ENCODE measurements at regions of chr12 and their contacts with region 1.

Region 1: DNA sequence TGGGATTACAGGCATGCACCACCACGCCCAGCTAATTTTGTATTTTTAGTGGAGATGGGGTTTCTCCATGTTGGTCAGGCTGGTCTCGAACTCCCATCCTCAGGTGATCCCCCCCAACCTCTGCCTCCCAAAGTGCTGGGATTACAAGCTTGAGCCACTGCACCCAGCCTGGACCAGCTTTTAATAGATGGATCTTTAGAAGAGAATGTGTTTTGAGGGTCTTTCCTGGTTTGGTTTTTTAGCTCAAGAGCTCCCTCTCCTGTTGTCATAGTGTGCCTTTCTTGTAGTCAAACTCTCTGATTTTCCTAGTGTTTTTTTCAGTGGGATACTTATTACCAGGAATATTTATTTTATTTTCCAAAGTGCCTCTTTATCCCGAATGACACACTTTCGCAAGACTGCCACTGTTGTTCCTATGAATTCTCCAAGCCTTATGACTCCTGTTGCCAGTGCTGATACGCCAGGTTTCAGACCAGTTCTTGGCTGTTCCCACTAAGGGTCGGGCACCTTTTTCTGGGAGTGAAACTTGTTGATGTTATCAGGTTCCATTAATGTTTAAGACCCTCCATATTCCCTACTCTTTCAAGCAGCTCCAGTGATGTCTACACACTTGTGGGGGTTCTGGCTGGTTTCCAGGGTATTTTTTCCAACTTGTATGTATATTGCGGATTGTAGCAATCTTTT is 31.5 kb upstream of the LIMA1 start:
- DNase-seq: peak; percentile 75
- H3K4me3 ChIP-seq: no peak overlapping the region
- H3K27ac ChIP-seq: no peak overlapping the region
- H3K4me1 ChIP-seq: no peaks in the 10 kb centered on the region
- H3K27me3 ChIP-seq: no peaks in the 10 kb centered on the region
- CTCF ChIP-seq: peak; percentile 76

Region 2: DNA sequence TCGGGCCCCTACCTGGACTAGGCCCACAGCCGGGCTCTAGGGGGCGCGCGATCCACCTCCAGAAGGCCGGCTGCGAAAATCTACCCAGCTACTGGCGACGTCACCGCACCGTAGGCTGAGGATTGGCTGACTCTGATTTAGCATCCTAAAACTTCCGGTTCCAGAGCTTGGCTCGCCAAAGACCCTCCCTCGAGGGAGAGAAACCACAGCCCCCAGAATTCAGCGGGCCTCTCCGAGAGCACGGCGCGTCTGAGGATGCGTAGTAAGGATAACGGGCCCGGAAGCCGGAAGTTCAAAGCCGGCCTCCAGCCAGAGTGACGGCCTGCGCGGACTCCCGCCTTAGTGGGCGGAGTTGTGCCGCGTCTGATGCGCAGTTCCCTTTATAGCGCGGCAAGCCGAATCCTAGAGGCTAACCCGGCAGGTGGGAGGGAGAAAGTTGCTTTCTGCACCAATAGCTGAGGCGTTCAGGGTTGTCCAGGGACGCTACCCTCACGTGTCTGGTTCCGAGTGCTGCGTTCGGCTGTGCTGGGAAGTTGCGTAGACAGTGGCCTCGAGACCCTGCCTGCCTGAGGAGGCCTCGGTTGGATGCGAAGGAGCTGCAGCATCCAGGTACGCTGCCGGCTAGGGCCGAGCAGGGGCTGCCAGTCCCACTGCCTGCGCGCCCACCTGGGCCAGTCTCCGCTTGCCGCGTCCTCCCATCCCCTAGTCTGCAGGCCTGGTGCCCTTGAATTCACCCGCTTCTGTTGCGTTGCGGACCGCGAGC is 202.9 kb before region 1 on chr12 and contains the start of gene COX14:
- CTCF ChIA-PET with region 1: interaction called, 10 read pairs
- POLR2A ChIA-PET with region 1: no interaction called
- intact Hi-C with region 1: no loop called
- DNase-seq: peak; percentile 100
- H3K4me3 ChIP-seq: peak within 1 kb of the TSS; percentile 74
- H3K27ac ChIP-seq: peak within 1 kb of the TSS; percentile 89
- H3K4me1 ChIP-seq: peaks cover 26% of the 10 kb centered on the region
- H3K27me3 ChIP-seq: no peaks in the 10 kb centered on the region
- CTCF ChIP-seq: peak; percentile 99
- total RNA-seq, gene COX14: 25.4 and 28.7 TPM in 2 replicates

Region 3: GRCh38 chr12:50132505-50133135 is 182.2 kb before region 1 on chr12:
- CTCF ChIA-PET with region 1: interaction called, 23 read pairs
- POLR2A ChIA-PET with region 1: no interaction called
- intact Hi-C with region 1: loop called (anchors 1 kb)
- DNase-seq: peak; percentile 61
- H3K4me3 ChIP-seq: no peak overlapping the region
- H3K27ac ChIP-seq: no peak overlapping the region
- H3K4me1 ChIP-seq: no peaks in the 10 kb centered on the region
- H3K27me3 ChIP-seq: no peaks in the 10 kb centered on the region
- CTCF ChIP-seq: peak; percentile 74

Region 4: GRCh38 chr12:50187084-50187900 is 127.5 kb before region 1 on chr12:
- CTCF ChIA-PET with region 1: interaction called, 6 read pairs
- POLR2A ChIA-PET with region 1: no interaction called
- intact Hi-C with region 1: loop called (anchors 10 kb)
- DNase-seq: peak; percentile 75
- H3K4me3 ChIP-seq: no peak overlapping the region
- H3K27ac ChIP-seq: peak overlapping the region; percentile 71
- H3K4me1 ChIP-seq: peaks cover 52% of the 10 kb centered on the region
- H3K27me3 ChIP-seq: no peaks in the 10 kb centered on the region
- CTCF ChIP-seq: 0 out of 2 replicates have a peak, but pooled peaks have one; percentile 15

Region 5: DNA sequence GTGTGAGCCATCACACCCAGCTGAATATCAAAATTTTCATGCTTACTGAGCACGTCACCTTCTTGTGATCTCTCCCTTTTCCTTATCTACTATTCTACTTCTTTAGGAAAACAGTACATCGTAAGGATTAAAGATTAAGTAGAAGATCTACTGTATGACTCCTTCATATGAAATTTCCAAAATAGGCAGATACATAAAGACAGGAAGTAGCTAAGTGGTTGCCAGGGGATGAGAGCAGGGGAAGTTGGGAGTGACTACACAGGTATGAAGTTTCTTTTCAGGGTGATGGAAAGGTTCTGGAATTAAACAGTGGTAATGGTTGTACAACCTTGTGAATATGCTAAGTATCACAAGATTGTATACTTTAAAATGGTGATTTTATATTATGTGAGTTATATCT is 111.1 kb before region 1 on chr12:
- CTCF ChIA-PET with region 1: no interaction called
- POLR2A ChIA-PET with region 1: no interaction called
- intact Hi-C with region 1: no loop called
- DNase-seq: no peak
- H3K4me3 ChIP-seq: no peak overlapping the region
- H3K27ac ChIP-seq: no peak overlapping the region
- H3K4me1 ChIP-seq: no peaks in the 10 kb centered on the region
- H3K27me3 ChIP-seq: no peaks in the 10 kb centered on the region
- CTCF ChIP-seq: no peak

Region 6: DNA sequence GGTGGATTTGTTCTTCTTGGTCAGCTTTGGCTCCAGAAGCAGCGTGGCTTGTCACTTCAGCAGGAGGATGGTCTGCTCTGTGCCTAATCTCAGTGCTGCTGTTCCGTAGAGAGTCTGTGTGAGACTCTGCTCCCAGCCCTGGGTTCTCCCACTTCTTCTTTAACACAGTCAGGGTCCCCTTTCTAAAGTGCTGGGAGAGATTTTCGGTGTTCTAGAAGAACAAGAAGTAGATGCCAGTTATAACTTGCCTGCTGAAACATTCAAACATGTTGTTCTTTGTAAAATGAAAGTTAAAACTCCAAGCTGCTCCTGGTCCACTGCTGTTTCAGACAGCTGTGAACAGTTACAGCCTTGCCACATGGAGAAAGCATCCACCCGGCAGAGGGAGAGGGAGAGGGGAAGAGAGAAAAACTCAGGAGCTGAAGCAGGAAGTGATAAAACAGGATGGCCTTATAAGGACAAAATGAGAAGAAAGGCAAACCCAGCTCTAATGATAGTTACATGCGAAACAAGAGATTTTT is 92.4 kb before region 1 on chr12:
- CTCF ChIA-PET with region 1: interaction called, 8 read pairs
- POLR2A ChIA-PET with region 1: interaction called, 3 read pairs
- intact Hi-C with region 1: loop called (anchors 5 kb)
- DNase-seq: peak; percentile 93
- H3K4me3 ChIP-seq: peak overlapping the region; percentile 58
- H3K27ac ChIP-seq: peak overlapping the region; percentile 91
- H3K4me1 ChIP-seq: peaks cover 21% of the 10 kb centered on the region
- H3K27me3 ChIP-seq: no peaks in the 10 kb centered on the region
- CTCF ChIP-seq: no peak